Panc1 (cell line): ENCODE measurements at regions of chr17 and their contacts with region 1.

Region 1: DNA sequence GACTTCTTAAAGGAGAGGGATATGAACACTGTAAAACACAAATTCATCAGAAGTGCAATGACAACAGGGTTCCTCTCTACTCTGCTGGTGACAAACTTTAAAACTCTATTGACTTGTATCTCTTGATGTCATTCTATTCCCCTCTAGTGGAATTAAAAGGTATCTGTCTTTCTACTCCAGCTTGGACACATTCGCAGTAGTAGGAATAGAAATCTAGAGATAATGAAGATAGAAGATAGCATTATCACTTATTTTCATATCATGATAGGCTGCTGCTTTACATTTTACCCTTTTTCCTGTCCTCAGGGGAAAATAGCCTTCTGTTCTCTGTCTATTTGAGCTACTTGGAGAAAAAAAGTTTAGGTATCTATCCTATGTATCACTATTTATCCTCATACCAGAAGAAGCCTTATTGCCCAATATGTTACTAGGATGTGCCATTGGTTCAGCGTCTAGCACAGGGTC is 209.6 kb upstream of the CACNG5 start:
- DNase-seq: no peak
- ATAC-seq: peak; percentile 77; the same call in 1 of the 2 replicates
- H3K4me3 ChIP-seq: no peak overlapping the region
- H3K27ac ChIP-seq: no peak overlapping the region
- H3K4me1 ChIP-seq: no peaks in the 10 kb centered on the region
- H3K27me3 ChIP-seq: no peaks in the 10 kb centered on the region
- CTCF ChIP-seq: peak; percentile 46; the same call in 1 of the 2 replicates

Region 2: DNA sequence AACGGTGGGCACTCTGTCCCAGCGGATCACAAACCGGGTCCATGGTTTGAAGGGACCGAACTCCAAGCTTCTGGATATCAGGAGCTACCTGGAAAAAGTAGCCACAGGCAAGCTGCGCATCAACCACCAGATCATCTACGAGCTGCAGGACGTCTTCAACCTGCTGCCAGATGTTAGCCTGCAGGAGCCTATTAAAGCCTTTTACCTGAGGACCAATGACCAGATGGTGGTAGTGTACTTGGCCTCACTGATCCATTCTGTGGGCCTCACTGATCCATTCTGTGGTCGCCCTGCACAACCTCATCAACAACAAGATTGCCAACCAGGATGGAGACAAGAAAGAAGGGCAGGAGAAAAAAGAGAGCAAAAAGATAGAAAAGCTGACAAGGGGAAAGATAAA is 427.1 kb before region 1 on chr17:
- CTCF ChIA-PET with region 1: no interaction called
- POLR2A ChIA-PET with region 1: no interaction called
- in situ Hi-C with region 1: no loop called
- intact Hi-C with region 1: loop called (anchors 2 kb)
- DNase-seq: no peak
- ATAC-seq: no peak
- H3K4me3 ChIP-seq: no peak overlapping the region
- H3K27ac ChIP-seq: no peak overlapping the region
- H3K4me1 ChIP-seq: no peaks in the 10 kb centered on the region
- H3K27me3 ChIP-seq: no peaks in the 10 kb centered on the region
- CTCF ChIP-seq: no peak

Region 3: GRCh38 chr17:66364990-66365490 is 260.3 kb before region 1 on chr17:
- CTCF ChIA-PET with region 1: no interaction called
- POLR2A ChIA-PET with region 1: no interaction called
- in situ Hi-C with region 1: no loop called
- intact Hi-C with region 1: no loop called
- DNase-seq: no peak
- ATAC-seq: no peak
- H3K4me3 ChIP-seq: no peak overlapping the region
- H3K27ac ChIP-seq: peak overlapping the region; percentile 57; the same call in 1 of the 2 replicates
- H3K4me1 ChIP-seq: peaks cover 40% of the 10 kb centered on the region
- H3K27me3 ChIP-seq: no peaks in the 10 kb centered on the region
- CTCF ChIP-seq: no peak

Region 4: DNA sequence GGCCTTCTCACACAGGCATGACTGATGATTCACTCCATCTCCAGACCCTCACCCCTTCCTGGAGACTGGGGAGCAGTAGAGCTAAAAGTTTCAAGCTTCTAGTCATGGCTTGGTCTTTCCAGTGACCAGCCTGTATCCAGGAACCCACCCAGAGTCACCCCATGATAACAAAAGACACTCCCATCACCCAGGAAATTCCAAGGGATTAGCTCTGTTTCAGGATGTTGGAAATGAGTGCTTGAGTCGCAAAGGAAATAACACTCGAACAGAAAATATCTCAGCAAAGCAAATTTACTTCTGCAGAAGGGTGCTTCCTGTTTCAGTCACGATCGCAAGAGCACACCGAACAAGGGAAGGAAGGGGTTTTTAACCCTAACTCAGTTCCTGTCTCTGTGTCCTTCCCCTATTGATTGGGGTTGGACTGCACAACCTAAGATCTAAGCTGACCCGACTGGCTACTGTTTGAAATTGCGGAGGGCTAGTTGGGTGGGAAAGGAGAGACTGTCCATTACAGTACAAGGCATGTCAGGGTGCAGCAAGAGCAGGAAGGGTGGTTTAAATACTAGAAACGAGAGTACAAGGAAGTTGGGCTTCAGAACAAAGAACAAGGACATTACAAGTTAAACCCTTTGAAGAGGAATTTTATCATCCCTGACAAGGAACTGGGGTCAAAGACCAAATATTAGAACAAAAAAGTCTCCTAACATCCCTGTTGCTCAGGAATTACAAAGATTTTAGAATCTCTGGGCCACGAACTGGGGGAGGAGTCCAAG is 14.8 kb before region 1 on chr17:
- CTCF ChIA-PET with region 1: no interaction called
- POLR2A ChIA-PET with region 1: no interaction called
- in situ Hi-C with region 1: no loop called
- intact Hi-C with region 1: no loop called
- DNase-seq: no peak
- ATAC-seq: no peak
- H3K4me3 ChIP-seq: no peak overlapping the region
- H3K27ac ChIP-seq: no peak overlapping the region
- H3K4me1 ChIP-seq: no peaks in the 10 kb centered on the region
- H3K27me3 ChIP-seq: no peaks in the 10 kb centered on the region
- CTCF ChIP-seq: no peak